ENCODE measurements at regions of chr6 and their contacts with region 1.

Region 1: GRCh38 chr6:123715006-123715875 is 78.5 kb upstream of the TRDN start:
- DNase-seq: no peak
- ATAC-seq: peak in 3 of 4 donors; percentile 46 to 70 (median 46)
- H3K4me3 ChIP-seq: no peak overlapping the region
- H3K27ac ChIP-seq: no peak overlapping the region
- H3K4me1 ChIP-seq: peaks cover 0 to 4% (median 0%) of the 10 kb centered on the region in 12 donors
- H3K27me3 ChIP-seq: no peaks in the 10 kb centered on the region
- CTCF ChIP-seq: peak; percentile 16 to 66 (median 56)
- POLR2A ChIP-seq: no peak

Region 2: GRCh38 chr6:123316733-123317323 is 398.4 kb before region 1 on chr6:
- intact Hi-C with region 1: no loop called
- DNase-seq: no peak
- ATAC-seq: no peak
- H3K4me3 ChIP-seq: no peak overlapping the region
- H3K27ac ChIP-seq: no peak overlapping the region
- H3K4me1 ChIP-seq: no peaks in the 10 kb centered on the region
- H3K27me3 ChIP-seq: no peaks in the 10 kb centered on the region
- CTCF ChIP-seq: peak; percentile 41 to 78 (median 62)
- POLR2A ChIP-seq: no peak

Region 3: GRCh38 chr6:123393328-123393727 is 321.9 kb before region 1 on chr6:
- intact Hi-C with region 1: loop called in 1 of 10 experiments (anchors 5 kb)
- DNase-seq: no peak
- ATAC-seq: no peak
- H3K4me3 ChIP-seq: no peak overlapping the region
- H3K27ac ChIP-seq: no peak overlapping the region
- H3K4me1 ChIP-seq: no peaks in the 10 kb centered on the region
- H3K27me3 ChIP-seq: no peaks in the 10 kb centered on the region
- CTCF ChIP-seq: peak in 11 of 12 donors; percentile 12 to 54 (median 26)
- POLR2A ChIP-seq: no peak

Region 4: DNA sequence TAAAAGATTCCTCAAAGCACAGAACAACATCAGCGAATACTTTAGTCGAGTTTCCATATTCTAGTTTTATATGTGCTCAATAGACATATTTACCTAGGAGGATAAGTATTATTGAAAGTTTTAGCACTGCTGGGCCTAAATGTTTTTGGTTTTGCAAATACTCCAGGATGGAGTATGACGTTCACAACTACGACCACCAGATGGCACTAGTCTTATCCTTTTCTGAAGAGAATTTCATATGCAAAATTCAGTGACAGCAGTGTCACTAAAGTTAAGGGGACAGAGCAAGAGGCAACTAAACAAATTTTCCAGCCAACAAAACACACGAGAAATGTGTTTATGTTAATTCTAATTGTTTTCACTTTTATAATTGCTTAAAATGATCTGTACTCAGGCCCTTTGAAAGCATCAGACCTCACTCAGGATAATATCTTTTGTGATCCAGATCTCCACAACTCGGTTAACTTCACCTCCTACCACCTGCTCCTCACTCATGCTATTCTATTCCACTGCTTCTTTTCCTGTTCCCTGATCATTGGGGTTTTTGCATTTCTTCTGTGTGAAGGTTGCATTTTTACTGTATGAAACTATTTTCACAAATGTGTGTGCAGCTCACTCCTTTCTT is 299.3 kb before region 1 on chr6:
- intact Hi-C with region 1: loop called (anchors 1 to 5 kb)
- DNase-seq: peak in 4 of 5 donors; percentile 19 to 52 (median 45)
- ATAC-seq: peak; percentile 47 to 76 (median 72)
- H3K4me3 ChIP-seq: no peak overlapping the region
- H3K27ac ChIP-seq: peak overlapping the region in 1 of 12 donors; percentile 22
- H3K4me1 ChIP-seq: peaks cover 0 to 11% (median 0%) of the 10 kb centered on the region in 12 donors
- H3K27me3 ChIP-seq: no peaks in the 10 kb centered on the region
- CTCF ChIP-seq: peak; percentile 55 to 73 (median 68)
- POLR2A ChIP-seq: no peak

Region 5: DNA sequence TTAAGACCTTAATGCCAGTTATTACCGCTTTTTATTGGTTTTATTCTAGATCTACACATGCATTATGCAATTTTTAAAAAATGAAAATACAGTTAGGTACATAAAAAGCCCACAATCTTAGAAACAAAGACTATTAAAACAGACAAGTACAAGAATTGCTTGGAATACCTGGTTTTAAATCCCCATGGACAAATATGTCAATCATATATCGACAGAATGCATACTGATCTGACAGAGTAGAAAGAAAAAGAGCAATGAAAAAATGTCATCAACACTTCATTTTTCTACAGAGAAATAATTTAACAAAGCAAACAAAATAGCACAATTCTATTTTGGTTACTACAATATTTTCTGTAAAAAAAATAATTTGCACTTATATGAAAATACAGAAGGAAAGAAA is 218.2 kb before region 1 on chr6:
- intact Hi-C with region 1: loop called in 3 of 10 experiments (anchors 10 kb)
- DNase-seq: no peak
- ATAC-seq: no peak
- H3K4me3 ChIP-seq: no peak overlapping the region
- H3K27ac ChIP-seq: no peak overlapping the region
- H3K4me1 ChIP-seq: no peaks in the 10 kb centered on the region
- H3K27me3 ChIP-seq: no peaks in the 10 kb centered on the region
- CTCF ChIP-seq: no peak
- POLR2A ChIP-seq: no peak

Region 6: DNA sequence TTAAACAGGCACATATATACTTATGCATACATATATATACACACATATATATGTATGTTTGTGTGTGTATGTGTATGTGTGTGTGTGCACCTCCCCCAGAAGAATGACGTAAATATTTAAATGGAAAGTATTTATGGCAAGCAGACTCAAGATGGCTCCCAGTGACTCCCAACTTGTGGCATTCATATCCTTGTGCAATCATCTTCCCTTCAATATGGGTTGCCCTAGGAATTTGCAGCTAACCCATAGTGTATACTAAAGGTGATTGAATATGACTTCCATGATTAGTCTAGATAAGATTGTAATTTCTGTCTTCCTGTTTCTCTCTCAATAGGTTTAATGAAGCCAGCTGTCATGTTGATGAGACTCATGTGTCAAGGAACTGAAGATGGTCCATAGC is 206.1 kb before region 1 on chr6:
- intact Hi-C with region 1: loop called in 3 of 10 experiments (anchors 10 kb)
- DNase-seq: no peak
- ATAC-seq: peak in 1 of 4 donors; percentile 12
- H3K4me3 ChIP-seq: no peak overlapping the region
- H3K27ac ChIP-seq: no peak overlapping the region
- H3K4me1 ChIP-seq: no peaks in the 10 kb centered on the region
- H3K27me3 ChIP-seq: no peaks in the 10 kb centered on the region
- CTCF ChIP-seq: no peak
- POLR2A ChIP-seq: no peak

Region 7: DNA sequence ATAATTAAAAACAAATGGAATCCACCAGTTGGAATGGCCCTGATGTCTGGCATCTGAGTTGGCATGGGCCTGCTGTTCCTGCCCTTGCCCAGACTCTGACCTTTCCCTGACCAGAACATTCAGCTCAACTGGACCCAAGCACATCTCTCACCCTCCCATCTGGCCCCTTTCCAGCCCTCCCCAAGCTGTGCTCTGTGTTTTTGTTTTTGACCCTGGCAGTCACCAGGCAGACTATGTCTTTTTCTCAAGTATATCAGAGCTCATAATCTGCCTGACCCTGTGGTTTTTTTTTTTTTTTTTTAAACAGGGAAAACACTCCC is 196.1 kb before region 1 on chr6:
- intact Hi-C with region 1: loop called in 1 of 10 experiments (anchors 10 kb)
- DNase-seq: peak; percentile 76 to 92 (median 84)
- ATAC-seq: peak; percentile 94 to 96 (median 95)
- H3K4me3 ChIP-seq: peak overlapping the region in 4 of 12 donors; percentile 9 to 33 (median 28)
- H3K27ac ChIP-seq: peak overlapping the region; percentile 61 to 91 (median 81)
- H3K4me1 ChIP-seq: peaks cover 0 to 25% (median 14%) of the 10 kb centered on the region in 12 donors
- H3K27me3 ChIP-seq: no peaks in the 10 kb centered on the region
- CTCF ChIP-seq: no peak
- POLR2A ChIP-seq: no peak

Region 8: DNA sequence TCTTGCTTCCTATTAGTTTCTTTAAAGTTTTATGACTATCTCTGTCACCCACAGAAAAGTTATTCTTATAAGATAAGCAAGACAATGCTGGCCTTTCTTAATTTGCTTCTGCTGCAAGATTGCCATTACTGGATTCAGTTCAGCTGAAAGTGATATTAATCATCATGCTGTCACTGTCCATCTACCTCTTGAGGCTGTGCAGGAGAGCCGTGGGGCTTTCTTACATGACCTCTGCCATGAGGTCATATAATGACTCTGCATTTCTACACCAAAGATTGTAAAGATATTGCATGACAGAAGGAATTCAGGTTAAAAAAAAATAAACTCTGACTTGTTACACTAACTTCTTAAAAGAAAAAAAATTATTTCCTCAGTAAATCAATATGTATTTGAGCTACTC is 185.4 kb before region 1 on chr6:
- intact Hi-C with region 1: no loop called
- DNase-seq: no peak
- ATAC-seq: no peak
- H3K4me3 ChIP-seq: no peak overlapping the region
- H3K27ac ChIP-seq: peak overlapping the region in 10 of 12 donors; percentile 4 to 55 (median 34)
- H3K4me1 ChIP-seq: peaks cover 0 to 22% (median 2%) of the 10 kb centered on the region in 12 donors
- H3K27me3 ChIP-seq: no peaks in the 10 kb centered on the region
- CTCF ChIP-seq: no peak
- POLR2A ChIP-seq: no peak